ENCODE measurements at regions of chr1 and their contacts with region 1.

Region 1: GRCh38 chr1:109112652-109113285 is 1.1 kb upstream of the ELAPOR1 start:
- DNase-seq: peak; percentile 86
- H3K4me3 Mint-ChIP-seq: peak overlapping the region; percentile 42
- H3K27ac Mint-ChIP-seq: no peak overlapping the region
- H3K4me1 Mint-ChIP-seq: peaks cover 9% of the 10 kb centered on the region
- H3K27me3 Mint-ChIP-seq: peaks cover 29% of the 10 kb centered on the region
- CTCF ChIP-seq: peak; percentile 91

Region 2: DNA sequence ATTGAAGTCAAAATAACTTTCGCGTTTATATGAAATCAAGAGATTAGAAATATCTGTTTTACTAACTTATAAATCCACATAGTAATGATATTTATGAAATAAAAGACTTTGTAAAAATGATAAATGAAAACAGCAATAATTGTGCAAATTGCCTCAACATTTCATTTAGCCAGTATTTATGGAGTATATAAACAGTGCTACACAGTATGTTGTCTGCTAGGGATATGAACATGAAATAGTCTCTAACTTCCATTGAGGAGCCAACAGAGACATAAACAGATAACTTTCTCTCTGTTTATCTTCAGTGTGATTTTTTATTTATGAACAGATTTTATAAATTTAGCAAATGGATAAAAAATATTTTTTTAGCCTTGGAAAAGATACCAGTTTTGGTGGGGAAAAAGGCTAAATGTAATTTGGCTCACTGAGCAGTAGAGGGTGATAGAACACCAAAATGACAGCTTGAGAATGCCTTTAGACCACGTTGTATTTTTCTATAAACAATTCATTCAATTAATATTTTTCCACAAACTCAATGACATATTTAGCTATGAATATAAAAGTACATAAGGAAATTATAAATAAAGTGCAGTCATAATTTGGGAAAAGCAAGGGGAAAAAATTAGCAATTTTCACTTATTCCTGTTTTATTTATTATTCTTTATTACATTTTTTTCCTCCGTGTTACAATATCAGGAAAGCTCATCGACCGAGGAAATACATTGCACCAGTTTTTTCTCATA is 600.4 kb before region 1 on chr1:
- CTCF ChIA-PET with region 1: no interaction called
- POLR2A ChIA-PET with region 1: no interaction called
- intact Hi-C with region 1: loop called (anchors 1 kb)
- DNase-seq: peak; percentile 52
- H3K4me3 Mint-ChIP-seq: no peak overlapping the region
- H3K27ac Mint-ChIP-seq: no peak overlapping the region
- H3K4me1 Mint-ChIP-seq: no peaks in the 10 kb centered on the region
- H3K27me3 Mint-ChIP-seq: peaks cover 15% of the 10 kb centered on the region
- CTCF ChIP-seq: peak; percentile 86

Region 3: DNA sequence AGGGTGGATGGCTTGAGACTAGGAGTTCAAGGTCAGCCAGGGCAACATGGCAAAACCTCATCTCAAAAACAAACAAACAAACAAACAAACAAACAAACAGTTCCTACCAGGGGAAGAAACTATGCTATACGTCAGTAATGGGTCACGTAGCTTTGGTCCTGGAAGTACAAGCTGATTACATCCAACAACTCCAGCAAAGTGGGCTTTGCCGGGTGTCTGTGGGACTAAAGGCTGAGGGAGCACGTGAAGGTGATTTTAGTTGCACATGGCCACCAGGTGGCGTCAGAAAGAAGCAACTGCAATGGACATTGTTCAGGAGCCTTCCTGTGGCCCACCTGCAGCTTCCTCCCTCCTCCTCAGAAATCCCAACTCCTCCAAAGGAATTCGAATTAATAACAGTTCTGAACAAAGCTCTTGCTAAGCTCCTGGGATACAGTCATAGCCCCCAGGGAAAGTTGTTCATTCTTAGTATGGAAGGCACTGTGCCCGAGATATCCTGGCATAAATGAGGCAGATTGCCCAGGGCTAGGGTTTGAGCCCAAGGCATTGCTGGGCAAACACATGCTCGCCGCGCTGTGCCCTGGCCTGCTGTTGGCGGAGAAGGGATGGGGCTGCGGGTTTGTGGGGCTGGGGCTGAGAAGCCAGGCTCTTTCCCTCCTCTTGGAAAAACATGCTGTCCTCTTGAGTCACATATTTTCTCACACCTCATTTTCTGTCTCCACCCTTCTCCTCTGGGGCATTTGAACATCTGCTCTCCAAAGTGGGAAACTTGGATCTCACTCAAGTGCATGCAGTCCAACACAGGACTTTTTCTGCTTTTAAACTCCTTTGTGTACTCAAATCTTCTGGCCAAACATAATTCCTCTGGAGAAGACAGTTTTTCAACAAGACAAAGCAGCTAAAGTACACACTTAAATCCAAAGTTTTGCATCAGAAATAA is 284.5 kb before region 1 on chr1:
- CTCF ChIA-PET with region 1: interaction called, 4 read pairs
- POLR2A ChIA-PET with region 1: no interaction called
- intact Hi-C with region 1: loop called (anchors 1 kb)
- DNase-seq: peak; percentile 96
- H3K4me3 Mint-ChIP-seq: peak overlapping the region; percentile 59
- H3K27ac Mint-ChIP-seq: peak overlapping the region; percentile 94
- H3K4me1 Mint-ChIP-seq: peaks cover 47% of the 10 kb centered on the region
- H3K27me3 Mint-ChIP-seq: no peaks in the 10 kb centered on the region
- CTCF ChIP-seq: peak; percentile 75

Region 4: DNA sequence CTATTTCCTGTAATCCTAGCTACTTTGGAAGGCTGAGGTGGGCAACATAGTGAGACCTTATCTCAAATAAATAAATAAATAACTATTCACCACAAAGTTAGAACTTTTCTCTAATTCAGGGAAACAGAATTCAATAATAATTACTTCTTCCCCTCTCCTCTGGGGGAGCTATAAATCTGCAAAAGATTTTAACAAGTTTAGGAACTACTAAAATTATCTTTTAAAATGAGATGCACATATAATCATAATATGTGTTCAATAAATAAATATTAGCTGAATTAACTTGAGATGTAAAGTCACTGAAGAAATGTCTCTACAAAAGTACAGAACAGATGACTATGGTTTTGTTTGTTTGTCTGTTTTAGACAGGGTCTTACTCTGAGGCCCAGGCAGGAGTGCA is 84.9 kb before region 1 on chr1:
- CTCF ChIA-PET with region 1: interaction called, 15 read pairs
- POLR2A ChIA-PET with region 1: no interaction called
- intact Hi-C with region 1: loop called (anchors 1 kb)
- DNase-seq: no peak
- H3K4me3 Mint-ChIP-seq: no peak overlapping the region
- H3K27ac Mint-ChIP-seq: no peak overlapping the region
- H3K4me1 Mint-ChIP-seq: no peaks in the 10 kb centered on the region
- H3K27me3 Mint-ChIP-seq: no peaks in the 10 kb centered on the region
- CTCF ChIP-seq: peak; percentile 7

Region 5: GRCh38 chr1:109099938-109100773 is 12.6 kb before region 1 on chr1:
- CTCF ChIA-PET with region 1: interaction called, 19 read pairs
- POLR2A ChIA-PET with region 1: interaction called, 23 read pairs
- intact Hi-C with region 1: no loop called
- DNase-seq: peak; percentile 97
- H3K4me3 Mint-ChIP-seq: peak overlapping the region; percentile 97
- H3K27ac Mint-ChIP-seq: peak overlapping the region; percentile 96
- H3K4me1 Mint-ChIP-seq: peaks cover 7% of the 10 kb centered on the region
- H3K27me3 Mint-ChIP-seq: no peaks in the 10 kb centered on the region
- CTCF ChIP-seq: peak; percentile 56

Region 6: GRCh38 chr1:109193653-109194590 is 81.2 kb after region 1 on chr1:
- CTCF ChIA-PET with region 1: interaction called, 6 read pairs
- POLR2A ChIA-PET with region 1: interaction called, 3 read pairs
- intact Hi-C with region 1: loop called (anchors 2 kb)
- DNase-seq: peak; percentile 58
- H3K4me3 Mint-ChIP-seq: no peak overlapping the region
- H3K27ac Mint-ChIP-seq: no peak overlapping the region
- H3K4me1 Mint-ChIP-seq: peaks cover 24% of the 10 kb centered on the region
- H3K27me3 Mint-ChIP-seq: no peaks in the 10 kb centered on the region
- CTCF ChIP-seq: peak; percentile 59

Region 7: GRCh38 chr1:109312978-109313775 is 200.4 kb after region 1 on chr1:
- CTCF ChIA-PET with region 1: no interaction called
- POLR2A ChIA-PET with region 1: no interaction called
- intact Hi-C with region 1: no loop called
- DNase-seq: peak; percentile 42
- H3K4me3 Mint-ChIP-seq: no peak overlapping the region
- H3K27ac Mint-ChIP-seq: no peak overlapping the region
- H3K4me1 Mint-ChIP-seq: peaks cover 10% of the 10 kb centered on the region
- H3K27me3 Mint-ChIP-seq: no peaks in the 10 kb centered on the region
- CTCF ChIP-seq: no peak

Region 8: GRCh38 chr1:109816175-109816811 is 703.5 kb after region 1 on chr1:
- CTCF ChIA-PET with region 1: no interaction called
- POLR2A ChIA-PET with region 1: no interaction called
- intact Hi-C with region 1: no loop called
- DNase-seq: no peak
- H3K4me3 Mint-ChIP-seq: no peak overlapping the region
- H3K27ac Mint-ChIP-seq: no peak overlapping the region
- H3K4me1 Mint-ChIP-seq: peaks cover 7% of the 10 kb centered on the region
- H3K27me3 Mint-ChIP-seq: no peaks in the 10 kb centered on the region
- CTCF ChIP-seq: no peak